A673 (cell line): ENCODE measurements at regions of chr5 and their contacts with region 1.

Region 1: DNA sequence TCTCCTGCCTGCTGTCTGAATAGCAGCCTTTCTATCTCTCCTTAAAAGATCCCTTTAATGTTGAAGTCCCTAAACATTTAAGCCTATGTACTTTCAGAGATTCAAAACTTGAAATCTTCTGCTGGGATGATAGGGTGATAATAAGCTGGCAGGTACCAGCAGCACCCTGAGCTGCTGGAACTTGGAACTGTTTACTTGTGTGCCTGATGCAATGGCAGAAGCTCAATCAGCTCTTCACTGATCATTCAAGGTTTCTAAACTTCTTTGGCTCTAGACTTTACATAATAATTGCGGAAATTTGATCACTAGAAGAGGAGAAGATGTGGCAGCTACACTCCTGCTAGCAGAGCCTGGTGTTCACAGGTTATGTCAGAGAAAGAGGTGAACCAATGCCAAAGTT is 27.6 kb downstream of the MRPS27 start:
- DNase-seq: no peak
- H3K4me3 ChIP-seq: no peak overlapping the region
- H3K27ac ChIP-seq: peak overlapping the region; percentile 17
- H3K4me1 ChIP-seq: peaks cover 10% of the 10 kb centered on the region
- H3K27me3 ChIP-seq: no peaks in the 10 kb centered on the region
- CTCF ChIP-seq: no peak

Region 2: GRCh38 chr5:72244862-72245371 is 47.5 kb before region 1 on chr5:
- CTCF ChIA-PET with region 1: no interaction called
- POLR2A ChIA-PET with region 1: no interaction called
- intact Hi-C with region 1: no loop called
- DNase-seq: peak; percentile 52
- H3K4me3 ChIP-seq: no peak overlapping the region
- H3K27ac ChIP-seq: peak overlapping the region; percentile 45
- H3K4me1 ChIP-seq: peaks cover 55% of the 10 kb centered on the region
- H3K27me3 ChIP-seq: no peaks in the 10 kb centered on the region
- CTCF ChIP-seq: peak; percentile 57

Region 3: GRCh38 chr5:72328172-72328571 is 35.8 kb after region 1 on chr5:
- CTCF ChIA-PET with region 1: no interaction called
- POLR2A ChIA-PET with region 1: interaction called, 12 read pairs
- intact Hi-C with region 1: no loop called
- DNase-seq: peak; percentile 50
- H3K4me3 ChIP-seq: no peak overlapping the region
- H3K27ac ChIP-seq: no peak overlapping the region
- H3K4me1 ChIP-seq: no peaks in the 10 kb centered on the region
- H3K27me3 ChIP-seq: no peaks in the 10 kb centered on the region
- CTCF ChIP-seq: no peak

Region 4: GRCh38 chr5:72702871-72703434 is 410.5 kb after region 1 on chr5:
- CTCF ChIA-PET with region 1: no interaction called
- POLR2A ChIA-PET with region 1: no interaction called
- intact Hi-C with region 1: no loop called
- DNase-seq: no peak
- H3K4me3 ChIP-seq: no peak overlapping the region
- H3K27ac ChIP-seq: no peak overlapping the region
- H3K4me1 ChIP-seq: no peaks in the 10 kb centered on the region
- H3K27me3 ChIP-seq: no peaks in the 10 kb centered on the region
- CTCF ChIP-seq: no peak